PC-3 (cell line): ENCODE measurements at regions of chr4 and their contacts with region 1.

Region 1: GRCh38 chr4:38620790-38621684 is 43.0 kb upstream of the KLF3 start:
- DNase-seq: peak; percentile 91
- ATAC-seq: peak; percentile 92
- H3K4me3 ChIP-seq: peak overlapping the region; percentile 42; the same call in 1 of the 2 replicates
- H3K27ac ChIP-seq: peak overlapping the region; percentile 87
- H3K4me1 ChIP-seq: peaks cover 23% of the 10 kb centered on the region
- H3K27me3 ChIP-seq: no peaks in the 10 kb centered on the region
- CTCF ChIP-seq: no peak

Region 2: GRCh38 chr4:38663801-38664705 is 43.0 kb after region 1 on chr4 and contains the start of gene KLF3:
- CTCF ChIA-PET with region 1: interaction called, 4 read pairs
- POLR2A ChIA-PET with region 1: no interaction called
- intact Hi-C with region 1: loop called (anchors 1 kb)
- DNase-seq: peak; percentile 77
- ATAC-seq: peak; percentile 75
- H3K4me3 ChIP-seq: peak within 1 kb of the TSS; percentile 87
- H3K27ac ChIP-seq: peak within 1 kb of the TSS; percentile 81
- H3K4me1 ChIP-seq: peaks cover 25% of the 10 kb centered on the region
- H3K27me3 ChIP-seq: no peaks in the 10 kb centered on the region
- CTCF ChIP-seq: no peak
- total RNA-seq, gene KLF3: 12.4 and 14.6 TPM in 2 replicates